ENCODE measurements at regions of chr10 and their contacts with region 1.

Region 1: DNA sequence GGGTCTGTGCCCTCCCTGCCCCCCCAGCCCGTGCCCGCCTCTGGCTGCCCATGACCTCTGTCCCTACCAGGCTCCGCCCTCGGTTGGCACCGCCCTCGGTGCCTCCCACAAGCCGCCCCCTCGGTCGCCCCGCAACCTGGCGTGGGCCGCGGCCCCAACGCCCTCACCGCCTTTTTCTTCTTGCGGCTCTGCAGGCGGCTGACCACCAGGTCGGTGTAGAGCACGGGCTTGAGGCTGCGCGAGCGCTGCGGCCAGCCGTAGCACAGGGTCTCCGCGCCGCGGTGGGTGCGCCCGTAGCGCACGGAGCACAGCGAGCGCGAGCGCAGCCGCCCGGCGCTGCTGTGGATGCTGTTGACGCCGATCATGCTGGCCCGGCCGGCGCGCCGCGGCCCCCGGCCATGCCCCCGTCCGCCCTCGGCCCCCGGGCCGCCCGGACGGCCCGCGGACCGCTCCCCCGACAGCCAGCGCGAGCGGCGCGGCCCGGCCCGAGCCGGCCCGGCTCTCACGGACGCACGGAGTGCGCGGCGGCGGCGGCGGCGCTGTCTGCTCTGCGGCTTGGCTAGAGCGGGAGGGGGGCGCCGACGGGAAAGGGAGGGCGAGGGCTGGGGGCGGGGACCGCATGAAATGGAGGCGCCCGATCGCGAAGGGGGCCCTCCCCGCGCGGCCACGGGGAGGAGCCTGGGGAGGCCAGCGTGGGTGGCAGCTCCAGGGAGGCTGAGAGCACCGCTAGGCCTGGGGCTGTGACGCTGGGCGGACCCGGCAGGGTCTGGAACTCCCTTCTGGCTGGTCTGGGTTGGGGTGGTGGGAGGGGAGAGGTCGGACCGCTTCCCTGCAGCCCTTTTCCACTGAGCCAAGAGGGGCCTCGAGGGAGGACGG is 9.6 kb downstream of the PSD start:
- DNase-seq: peak; percentile 55
- ATAC-seq: peak; percentile 29
- H3K4me3 Mint-ChIP-seq: peak overlapping the region; percentile 69
- H3K27ac Mint-ChIP-seq: no peak overlapping the region
- H3K4me1 Mint-ChIP-seq: peaks cover 30% of the 10 kb centered on the region
- H3K27me3 Mint-ChIP-seq: peaks cover 67% of the 10 kb centered on the region
- CTCF ChIP-seq: no peak

Region 2: DNA sequence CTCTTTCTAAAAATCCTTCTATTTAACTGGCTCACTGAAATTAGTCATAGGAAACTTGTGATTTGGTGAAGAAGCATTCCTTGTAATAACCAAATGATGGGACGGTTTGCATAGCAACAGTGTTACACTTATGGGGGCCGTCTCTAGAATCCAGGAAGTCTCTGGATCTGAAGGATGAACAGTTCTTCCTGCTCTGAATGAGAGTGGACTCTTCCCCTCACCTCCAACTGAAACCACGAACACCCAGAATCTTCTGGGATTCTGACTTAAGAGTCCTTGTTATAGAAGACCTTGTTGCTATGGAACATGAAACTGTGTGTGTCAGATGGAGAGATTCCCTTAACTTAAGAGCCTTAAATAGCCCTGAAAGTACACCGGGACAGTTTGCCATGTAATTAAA is 233.6 kb before region 1 on chr10:
- CTCF ChIA-PET with region 1: no interaction called
- POLR2A ChIA-PET with region 1: no interaction called
- DNase-seq: no peak
- ATAC-seq: no peak
- H3K4me3 Mint-ChIP-seq: no peak overlapping the region
- H3K27ac Mint-ChIP-seq: no peak overlapping the region
- H3K4me1 Mint-ChIP-seq: no peaks in the 10 kb centered on the region
- H3K27me3 Mint-ChIP-seq: peaks cover 12% of the 10 kb centered on the region
- CTCF ChIP-seq: no peak

Region 3: GRCh38 chr10:102394079-102394800 is 14.7 kb before region 1 on chr10:
- CTCF ChIA-PET with region 1: interaction called, 61 read pairs
- POLR2A ChIA-PET with region 1: no interaction called
- DNase-seq: peak; percentile 93
- ATAC-seq: peak; percentile 81
- H3K4me3 Mint-ChIP-seq: peak overlapping the region; percentile 75
- H3K27ac Mint-ChIP-seq: peak overlapping the region; percentile 12; the same call in 1 of the 2 replicates
- H3K4me1 Mint-ChIP-seq: peaks cover 18% of the 10 kb centered on the region
- H3K27me3 Mint-ChIP-seq: peaks cover 41% of the 10 kb centered on the region
- CTCF ChIP-seq: no peak; the same call in none of the 2 replicates

Region 4: DNA sequence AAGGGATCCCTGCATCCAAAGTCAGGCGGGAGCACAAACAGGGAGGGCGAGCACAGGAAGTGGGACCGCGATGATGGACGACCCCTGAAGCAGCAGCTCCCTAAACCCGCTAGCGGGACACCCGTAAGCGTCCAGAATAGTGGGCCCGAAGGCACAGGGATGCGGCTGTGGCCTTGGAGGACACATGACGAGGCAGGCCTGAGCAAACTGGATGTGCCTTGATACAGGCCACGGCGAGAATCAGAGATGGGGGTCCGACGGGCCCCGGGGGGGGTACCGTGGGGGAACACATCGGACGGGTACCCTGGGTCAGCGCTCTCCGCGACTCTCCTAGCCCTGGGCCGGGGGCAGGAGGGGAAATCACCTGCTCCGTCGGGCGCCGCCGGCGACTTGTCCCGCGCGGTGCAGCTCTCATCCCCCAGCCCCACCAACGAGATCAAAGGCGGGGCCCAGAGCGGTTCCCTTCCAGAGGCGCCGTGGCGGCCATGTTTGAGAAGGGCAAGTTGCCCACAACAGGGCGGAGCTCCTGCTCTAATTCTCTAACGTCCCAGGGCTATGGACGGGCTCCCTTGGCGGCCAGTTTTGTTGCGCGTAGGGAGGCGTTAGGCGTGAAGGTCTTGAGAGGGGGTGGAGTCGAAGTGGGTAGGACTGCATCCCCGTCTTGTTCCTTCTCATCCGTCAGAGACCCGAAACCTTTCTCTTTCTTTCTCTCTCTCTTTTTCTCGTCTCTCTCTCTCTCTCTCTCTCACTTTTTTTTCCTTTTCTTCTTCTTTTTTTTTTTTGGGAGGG is 23.4 kb after region 1 on chr10 and contains the start of gene CUEDC2:
- CTCF ChIA-PET with region 1: interaction called, 13 read pairs
- POLR2A ChIA-PET with region 1: interaction called, 4 read pairs
- DNase-seq: peak; percentile 99
- ATAC-seq: peak; percentile 90
- H3K4me3 Mint-ChIP-seq: peak within 1 kb of the TSS; percentile 95
- H3K27ac Mint-ChIP-seq: peak within 1 kb of the TSS; percentile 57
- H3K4me1 Mint-ChIP-seq: peaks cover 18% of the 10 kb centered on the region
- H3K27me3 Mint-ChIP-seq: peaks cover 57% of the 10 kb centered on the region
- CTCF ChIP-seq: no peak
- total RNA-seq, gene CUEDC2: 40.2 to 69.0 TPM (median 65.8 TPM) in 3 replicates

Region 5: DNA sequence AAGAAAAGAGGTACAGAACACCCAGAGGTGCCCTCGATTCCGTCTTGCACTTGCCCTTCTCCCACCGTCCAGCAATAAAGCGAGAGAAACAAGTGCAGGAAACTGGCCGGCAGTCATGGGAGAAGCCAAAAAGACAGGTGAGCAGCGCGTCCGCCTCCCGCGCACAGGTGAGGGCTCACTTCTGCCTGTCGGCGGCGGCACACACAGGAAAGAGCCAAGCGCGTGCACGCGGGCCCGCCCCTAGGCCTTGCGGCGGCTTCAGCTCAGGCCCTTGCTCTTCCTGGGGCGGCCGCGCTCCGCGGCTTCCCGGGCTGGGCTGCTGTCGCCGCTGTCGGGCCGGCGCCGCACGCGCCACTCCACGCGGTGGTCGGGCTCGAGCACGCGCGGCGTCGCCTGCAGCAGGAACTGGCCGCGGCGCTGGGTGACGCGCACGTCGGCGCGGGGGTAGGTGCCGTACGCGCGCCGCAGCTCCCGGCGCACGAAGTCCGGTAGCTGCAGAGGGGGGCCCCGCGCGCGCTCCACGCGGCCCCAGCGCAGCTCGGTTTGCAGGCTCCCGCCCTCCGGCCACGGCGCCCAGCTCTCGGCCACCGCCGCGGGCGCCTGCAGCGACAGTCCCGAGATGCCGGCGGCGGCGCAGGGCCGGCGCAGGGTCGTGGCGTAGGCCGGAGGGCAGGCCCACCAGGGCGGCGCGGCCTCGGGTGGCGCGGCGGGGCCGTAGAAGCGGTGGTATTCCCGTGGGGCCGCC is 41.4 kb after region 1 on chr10:
- CTCF ChIA-PET with region 1: interaction called, 13 read pairs
- POLR2A ChIA-PET with region 1: interaction called, 3 read pairs
- DNase-seq: peak; percentile 80
- ATAC-seq: peak; percentile 52
- H3K4me3 Mint-ChIP-seq: peak overlapping the region; percentile 93
- H3K27ac Mint-ChIP-seq: peak overlapping the region; percentile 83
- H3K4me1 Mint-ChIP-seq: peaks cover 39% of the 10 kb centered on the region
- H3K27me3 Mint-ChIP-seq: no peaks in the 10 kb centered on the region
- CTCF ChIP-seq: no peak

Region 6: GRCh38 chr10:102565793-102566192 is 156.8 kb after region 1 on chr10:
- CTCF ChIA-PET with region 1: no interaction called
- POLR2A ChIA-PET with region 1: no interaction called
- DNase-seq: peak; percentile 79
- ATAC-seq: peak; percentile 94
- H3K4me3 Mint-ChIP-seq: no peak overlapping the region
- H3K27ac Mint-ChIP-seq: no peak overlapping the region
- H3K4me1 Mint-ChIP-seq: peaks cover 4% of the 10 kb centered on the region
- H3K27me3 Mint-ChIP-seq: peaks cover 94% of the 10 kb centered on the region
- CTCF ChIP-seq: 0 out of 2 replicates have a peak, but pooled peaks have one; percentile 12

Region 7: DNA sequence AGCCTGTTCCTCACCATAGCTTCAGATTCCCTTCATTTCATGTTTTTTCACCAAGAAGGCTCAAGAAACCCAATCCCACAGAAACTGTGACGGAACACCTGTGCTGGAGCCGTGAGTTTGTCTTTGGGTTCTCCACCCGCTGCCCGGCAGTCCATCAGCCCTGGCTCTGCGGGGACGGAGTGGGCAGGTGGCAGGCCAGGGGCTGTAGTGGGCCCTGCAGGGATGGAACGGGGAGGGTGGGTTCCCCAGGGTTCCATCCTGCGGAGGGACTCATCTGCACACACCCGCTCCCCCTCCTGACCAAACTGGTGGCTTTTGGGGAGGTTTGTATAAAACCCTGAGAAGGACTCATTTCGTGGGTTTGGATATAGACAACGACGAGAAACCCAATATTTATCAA is 413.3 kb after region 1 on chr10:
- CTCF ChIA-PET with region 1: no interaction called
- POLR2A ChIA-PET with region 1: no interaction called
- DNase-seq: no peak
- ATAC-seq: no peak
- H3K4me3 Mint-ChIP-seq: no peak overlapping the region
- H3K27ac Mint-ChIP-seq: no peak overlapping the region
- H3K4me1 Mint-ChIP-seq: no peaks in the 10 kb centered on the region
- H3K27me3 Mint-ChIP-seq: no peaks in the 10 kb centered on the region
- CTCF ChIP-seq: no peak

Measured in WTC11 (cell line).